ENCODE measurements at regions of chr21 and their contacts with region 1.

Region 1: DNA sequence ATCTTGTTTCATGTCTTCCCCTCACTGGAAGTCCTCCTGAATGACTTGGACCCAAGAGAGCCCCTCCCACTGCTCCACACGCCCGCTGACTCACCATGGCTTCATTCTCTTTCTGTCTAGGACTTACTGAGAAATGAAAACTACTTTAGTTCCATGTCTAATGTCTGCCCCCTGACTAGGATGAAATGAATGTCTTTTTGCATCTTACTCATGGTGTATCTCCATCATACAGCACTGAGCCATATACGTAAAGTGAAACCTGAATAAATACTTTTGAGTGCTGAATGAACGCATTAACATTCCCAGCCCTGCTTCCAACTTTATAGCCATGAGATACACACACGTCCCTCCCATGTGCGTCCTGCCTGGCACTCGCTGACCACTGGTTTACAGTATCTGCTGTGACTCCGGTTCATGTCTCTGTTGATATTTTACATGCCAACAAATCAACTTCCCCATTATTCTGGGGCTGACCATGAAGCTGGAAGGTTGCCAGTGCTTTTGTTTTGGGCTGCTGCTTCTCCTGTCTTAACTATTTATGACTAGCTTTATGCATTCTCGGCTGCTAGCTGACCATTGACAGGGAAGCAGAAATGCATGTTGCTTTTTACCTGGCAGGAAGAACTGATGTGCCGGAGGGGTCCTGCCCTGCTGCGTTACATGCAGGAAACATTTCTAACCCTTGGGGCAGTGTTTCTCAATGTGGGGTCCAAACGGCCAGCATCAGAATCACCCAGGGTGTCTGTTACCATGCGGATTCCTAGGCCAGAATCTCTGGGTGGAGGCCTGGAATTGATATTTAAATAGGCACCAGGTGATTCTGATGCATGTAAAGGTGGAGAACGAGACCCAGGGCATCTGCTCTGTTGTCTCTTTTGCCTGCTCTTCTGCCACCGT is 182.4 kb downstream of the PCP4 start:
- DNase-seq: no peak
- ATAC-seq: no peak
- H3K4me3 ChIP-seq: no peak overlapping the region
- H3K27ac ChIP-seq: peak overlapping the region in 1 of 12 donors; percentile 84
- H3K4me1 ChIP-seq: peaks cover 0 to 13% (median 2%) of the 10 kb centered on the region in 12 donors
- H3K27me3 ChIP-seq: no peaks in the 10 kb centered on the region
- CTCF ChIP-seq: no peak
- POLR2A ChIP-seq: no peak

Region 2: GRCh38 chr21:39788383-39788782 is 261.3 kb before region 1 on chr21:
- intact Hi-C with region 1: loop called in 4 of 10 experiments (anchors 5 to 10 kb)
- DNase-seq: peak; percentile 75 to 91 (median 84)
- ATAC-seq: peak; percentile 98 to 99 (median 99)
- H3K4me3 ChIP-seq: peak overlapping the region in 11 of 12 donors; percentile 14 to 50 (median 37)
- H3K27ac ChIP-seq: peak overlapping the region in 8 of 12 donors; percentile 26 to 59 (median 50)
- H3K4me1 ChIP-seq: peaks cover 0 to 12% (median 0%) of the 10 kb centered on the region in 12 donors
- H3K27me3 ChIP-seq: no peaks in the 10 kb centered on the region
- CTCF ChIP-seq: peak; percentile 51 to 92 (median 76)
- POLR2A ChIP-seq: no peak

Region 3: DNA sequence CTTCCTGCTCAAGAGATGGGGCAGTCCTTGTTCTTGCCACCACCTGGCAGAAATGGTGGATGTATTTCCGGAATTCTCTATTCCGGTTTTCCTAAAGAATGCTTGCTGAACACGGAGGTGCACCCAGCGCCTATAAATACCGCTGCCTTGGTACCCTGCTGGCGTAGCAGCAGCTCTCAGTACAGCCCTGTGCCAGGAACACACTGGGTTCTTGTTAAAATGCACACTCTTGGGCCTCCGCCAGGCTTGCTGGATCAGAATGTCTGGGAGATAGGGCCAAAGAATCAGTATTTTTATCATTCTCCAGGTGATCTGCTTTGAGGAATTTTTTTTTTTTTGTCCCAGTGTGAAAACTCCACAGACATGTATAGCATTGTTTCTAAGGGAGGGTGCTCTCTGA is 250.5 kb before region 1 on chr21:
- intact Hi-C with region 1: loop called in 1 of 10 experiments (anchors 10 kb)
- DNase-seq: peak in 4 of 5 donors; percentile 20 to 68 (median 44)
- ATAC-seq: peak; percentile 83 to 91 (median 90)
- H3K4me3 ChIP-seq: no peak overlapping the region
- H3K27ac ChIP-seq: no peak overlapping the region
- H3K4me1 ChIP-seq: peaks cover 0 to 16% (median 0%) of the 10 kb centered on the region in 12 donors
- H3K27me3 ChIP-seq: no peaks in the 10 kb centered on the region
- CTCF ChIP-seq: no peak
- POLR2A ChIP-seq: no peak

Region 4: GRCh38 chr21:40639616-40640194 is 590.1 kb after region 1 on chr21:
- intact Hi-C with region 1: no loop called
- DNase-seq: no peak
- ATAC-seq: no peak
- H3K4me3 ChIP-seq: no peak overlapping the region
- H3K27ac ChIP-seq: no peak overlapping the region
- H3K4me1 ChIP-seq: no peaks in the 10 kb centered on the region
- H3K27me3 ChIP-seq: peaks cover 0 to 8% (median 0%) of the 10 kb centered on the region in 9 donors
- CTCF ChIP-seq: no peak
- POLR2A ChIP-seq: no peak